GM12878 (cell line): ENCODE measurements at regions of chr17 and their contacts with region 1.

Region 1: DNA sequence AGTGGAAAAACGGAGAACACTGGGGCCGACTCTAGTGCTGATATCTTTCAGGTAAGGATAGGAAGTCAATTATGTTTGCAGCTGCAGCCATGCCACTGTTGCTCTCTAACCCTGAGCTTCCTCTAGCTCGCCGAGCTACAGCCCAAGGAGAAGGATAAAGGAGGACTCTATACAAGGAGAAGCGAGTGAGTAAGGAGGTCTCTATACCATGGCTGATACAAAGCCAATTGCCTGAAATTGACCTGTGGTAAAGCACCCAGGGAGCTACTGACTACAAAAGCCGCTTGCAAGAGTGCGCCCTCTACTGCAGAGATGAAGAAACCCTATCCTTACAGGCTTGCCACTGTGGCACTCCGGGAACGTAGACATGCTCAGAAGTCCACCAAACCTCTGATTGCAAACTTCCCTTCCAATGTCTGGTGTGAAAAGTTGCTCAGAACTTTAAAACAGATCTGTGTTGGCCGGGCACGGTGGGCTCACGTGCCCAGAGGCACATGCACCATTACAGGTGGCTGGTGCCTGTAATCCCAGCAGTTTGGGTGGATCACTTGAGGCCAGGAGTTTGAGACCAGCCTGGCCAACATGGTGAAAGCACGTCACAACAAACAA is 10.8 kb upstream of the SLC46A1 start:
- DNase-seq: no peak
- ATAC-seq: peak; percentile 100
- H3K4me3 ChIP-seq: no peak overlapping the region
- H3K27ac ChIP-seq: no peak overlapping the region
- H3K4me1 ChIP-seq: no peaks in the 10 kb centered on the region
- H3K27me3 ChIP-seq: no peaks in the 10 kb centered on the region
- CTCF ChIP-seq: peak; percentile 84 to 91 (median 91)
- EP300 ChIP-seq: no peak
- POLR2A ChIP-seq: no peak
- RAD21 ChIP-seq: peak; percentile 70

Region 2: DNA sequence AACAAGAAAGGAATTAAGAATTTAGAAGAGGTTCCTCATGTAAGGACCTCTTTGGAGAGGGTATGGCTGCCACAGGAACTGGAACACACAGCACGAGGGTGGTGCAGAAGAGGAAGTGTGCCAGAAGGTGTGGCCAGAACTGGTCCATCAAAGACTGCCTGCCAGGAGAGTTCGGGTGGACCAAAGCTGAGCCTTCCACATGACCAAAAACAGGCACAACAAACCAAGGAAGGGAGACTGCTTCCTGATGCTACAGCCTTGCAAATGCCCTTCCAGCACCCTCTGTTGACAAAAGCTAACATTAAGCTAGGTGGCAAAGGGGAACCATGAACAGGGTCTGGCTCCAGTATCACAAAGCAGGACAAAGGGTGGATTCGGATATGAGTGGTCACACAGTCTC is 223.6 kb before region 1 on chr17:
- CTCF ChIA-PET with region 1: no interaction called
- POLR2A ChIA-PET with region 1: no interaction called
- RAD21 ChIA-PET with region 1: no interaction called
- SMC1A ChIA-PET with region 1: no interaction called
- in situ Hi-C with region 1: no loop called
- intact Hi-C with region 1: no loop called
- DNase-seq: no peak
- ATAC-seq: peak; percentile 63
- H3K4me3 ChIP-seq: no peak overlapping the region
- H3K27ac ChIP-seq: no peak overlapping the region
- H3K4me1 ChIP-seq: no peaks in the 10 kb centered on the region
- H3K27me3 ChIP-seq: no peaks in the 10 kb centered on the region
- CTCF ChIP-seq: peak in 1 of 3 experiments; percentile 22; a peak in 2 of 6 replicates
- EP300 ChIP-seq: no peak
- POLR2A ChIP-seq: no peak
- RAD21 ChIP-seq: no peak

Region 3: DNA sequence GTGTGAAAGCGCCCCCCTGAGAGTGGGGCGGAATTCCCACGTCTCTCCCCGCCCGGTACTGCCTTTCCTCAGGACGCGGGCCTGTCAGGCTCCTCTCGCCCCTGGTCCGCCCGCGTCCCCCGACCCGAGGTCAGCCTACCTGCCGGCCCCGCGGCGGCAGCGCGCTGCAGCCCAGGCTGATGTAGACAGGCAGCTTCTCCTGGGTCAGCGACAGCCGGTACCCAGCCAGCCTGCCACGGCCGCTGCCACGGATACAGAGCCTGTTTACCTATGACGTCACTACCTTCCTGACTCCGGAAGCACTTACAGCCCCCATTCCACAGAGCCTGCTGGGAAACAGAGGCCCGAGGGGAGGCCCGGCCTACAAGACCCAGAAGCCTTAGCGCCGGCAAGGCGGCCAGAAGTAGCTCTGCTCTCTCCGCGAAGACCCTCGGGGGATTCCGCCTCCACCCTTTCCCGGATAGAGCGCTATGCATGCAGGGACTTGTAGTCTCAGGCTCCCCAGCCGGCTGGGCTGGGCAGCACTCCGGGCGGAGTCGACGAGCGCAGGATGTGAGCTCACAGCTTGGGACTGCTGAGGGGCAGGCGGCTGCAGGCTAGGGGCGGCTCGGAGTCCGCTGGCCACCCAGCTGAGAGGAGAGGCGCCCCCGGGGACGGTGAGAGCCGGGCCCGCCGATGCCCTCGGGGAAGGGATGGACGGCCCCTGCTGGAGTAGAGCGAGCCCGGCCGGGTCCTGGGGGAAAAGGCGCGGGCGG is 81.4 kb before region 1 on chr17 and contains the starts of genes IFT20 and TNFAIP1:
- CTCF ChIA-PET with region 1: interaction called, 15 read pairs
- POLR2A ChIA-PET with region 1: interaction called, 4 read pairs
- RAD21 ChIA-PET with region 1: interaction called, 9 read pairs
- SMC1A ChIA-PET with region 1: interaction called, 7 read pairs
- in situ Hi-C with region 1: no loop called
- intact Hi-C with region 1: no loop called
- DNase-seq: peak; percentile 98
- ATAC-seq: peak; percentile 98
- H3K4me3 ChIP-seq: peak within 1 kb of the TSS; percentile 88
- H3K27ac ChIP-seq: peak within 1 kb of the TSS; percentile 36
- H3K4me1 ChIP-seq: peaks cover 3% of the 10 kb centered on the region
- H3K27me3 ChIP-seq: no peaks in the 10 kb centered on the region
- CTCF ChIP-seq: no peak
- EP300 ChIP-seq: 0 out of 4 replicates have a peak, but pooled peaks of 1 of the 2 experiments have one; percentile 34
- POLR2A ChIP-seq: peak; percentile 93
- RAD21 ChIP-seq: no peak
- polyA plus RNA-seq, gene IFT20: 9.4 to 13.1 TPM
- polyA plus RNA-seq, gene TNFAIP1: 1.8 to 3.9 TPM

Region 4: DNA sequence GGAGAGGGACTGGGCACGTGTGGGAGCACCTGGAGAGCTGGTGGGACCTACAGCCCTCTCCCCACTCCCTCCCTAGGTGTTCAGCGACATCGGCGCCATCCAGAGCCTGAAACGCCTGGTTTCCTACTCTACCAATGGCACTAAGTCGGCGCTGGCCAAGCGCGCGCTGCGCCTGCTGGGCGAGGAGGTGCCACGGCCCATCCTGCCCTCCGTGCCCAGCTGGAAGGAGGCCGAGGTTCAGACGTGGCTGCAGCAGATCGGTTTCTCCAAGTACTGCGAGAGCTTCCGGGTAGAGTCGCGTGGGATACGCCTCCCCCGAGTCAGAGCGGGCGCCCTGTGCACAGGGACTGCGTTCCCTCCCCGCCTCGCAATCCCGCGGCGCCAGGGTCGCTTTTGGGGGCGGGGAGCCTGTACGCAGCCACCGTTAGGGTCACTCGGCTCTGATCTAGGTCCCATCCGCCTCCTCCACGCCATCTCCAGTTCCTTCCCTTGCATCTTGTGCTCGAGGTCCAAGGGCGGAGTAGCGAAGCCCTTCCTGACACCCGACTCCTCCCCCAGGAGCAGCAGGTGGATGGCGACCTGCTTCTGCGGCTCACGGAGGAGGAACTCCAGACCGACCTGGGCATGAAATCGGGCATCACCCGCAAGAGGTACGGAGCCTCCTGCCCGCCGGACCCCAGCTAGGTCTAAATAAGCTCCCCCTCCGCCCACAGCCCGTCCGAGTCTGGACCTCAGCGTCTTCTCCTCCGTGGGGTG is 32.3 kb before region 1 on chr17:
- CTCF ChIA-PET with region 1: interaction called, 14 read pairs
- POLR2A ChIA-PET with region 1: no interaction called
- RAD21 ChIA-PET with region 1: no interaction called
- SMC1A ChIA-PET with region 1: no interaction called
- in situ Hi-C with region 1: no loop called
- intact Hi-C with region 1: no loop called
- DNase-seq: no peak
- ATAC-seq: peak; percentile 90
- H3K4me3 ChIP-seq: peak overlapping the region; percentile 65
- H3K27ac ChIP-seq: 0 out of 2 replicates have a peak overlapping the region, but pooled peaks have one; percentile 1
- H3K4me1 ChIP-seq: no peaks in the 10 kb centered on the region
- H3K27me3 ChIP-seq: no peaks in the 10 kb centered on the region; a peak in 2 of 4 replicates
- CTCF ChIP-seq: no peak
- EP300 ChIP-seq: no peak
- POLR2A ChIP-seq: peak; percentile 91
- RAD21 ChIP-seq: no peak

Region 5: DNA sequence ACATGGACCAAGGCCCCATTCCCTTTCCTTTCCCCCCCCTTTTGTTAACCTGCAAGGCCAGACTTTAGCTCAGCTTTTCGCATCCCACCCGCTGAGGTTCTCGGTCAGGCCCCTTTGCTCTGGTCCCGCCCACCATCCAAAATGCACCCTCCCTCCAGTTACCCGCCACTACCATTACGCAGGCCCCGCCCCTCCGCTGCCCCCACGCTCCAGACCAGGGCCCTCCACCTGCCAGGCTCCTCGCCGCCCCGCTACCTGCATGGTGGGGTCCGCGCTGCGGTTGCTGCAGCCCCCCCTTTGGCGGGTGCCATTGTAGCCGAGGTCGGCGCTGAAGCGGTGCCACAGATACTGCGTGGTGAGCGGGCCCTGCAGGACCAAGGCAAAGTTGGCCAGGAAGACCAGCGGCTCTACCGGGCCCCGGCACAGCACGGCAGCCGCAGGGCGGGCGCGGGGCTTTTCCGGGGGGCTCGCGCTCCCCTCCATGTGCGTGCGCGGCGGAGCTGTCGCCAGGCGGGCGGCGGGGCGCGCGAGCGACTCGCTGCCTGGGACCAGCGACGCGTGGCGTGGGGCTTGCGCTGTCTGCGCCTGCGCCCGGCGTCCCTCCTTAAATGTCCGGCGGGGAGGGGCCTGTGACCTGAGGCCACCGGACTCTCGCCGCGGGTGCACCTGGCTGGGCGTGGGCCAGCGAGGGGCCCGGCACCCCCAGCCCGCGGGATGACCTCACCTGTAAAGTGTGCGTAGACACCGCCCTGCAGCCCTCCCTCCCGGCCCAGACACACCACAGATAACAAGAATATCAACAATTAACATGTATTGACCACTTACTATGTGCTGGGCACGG is 11.0 kb before region 1 on chr17 and contains the start of gene SLC46A1:
- CTCF ChIA-PET with region 1: interaction called, 37 read pairs
- POLR2A ChIA-PET with region 1: no interaction called
- RAD21 ChIA-PET with region 1: no interaction called
- SMC1A ChIA-PET with region 1: interaction called, 3 read pairs
- in situ Hi-C with region 1: no loop called
- intact Hi-C with region 1: no loop called
- DNase-seq: no peak
- ATAC-seq: peak; percentile 95
- H3K4me3 ChIP-seq: peak within 1 kb of the TSS; percentile 75
- H3K27ac ChIP-seq: peak within 1 kb of the TSS; percentile 37; the same call in 1 of the 2 replicates
- H3K4me1 ChIP-seq: peaks cover 3% of the 10 kb centered on the region
- H3K27me3 ChIP-seq: no peaks in the 10 kb centered on the region
- CTCF ChIP-seq: no peak
- EP300 ChIP-seq: no peak
- POLR2A ChIP-seq: peak; percentile 69
- RAD21 ChIP-seq: no peak
- polyA plus RNA-seq, gene SLC46A1: 3.4 to 6.0 TPM

Region 6: GRCh38 chr17:29687596-29687995 is 1270.8 kb after region 1 on chr17:
- CTCF ChIA-PET with region 1: no interaction called
- POLR2A ChIA-PET with region 1: no interaction called
- RAD21 ChIA-PET with region 1: no interaction called
- SMC1A ChIA-PET with region 1: no interaction called
- in situ Hi-C with region 1: no loop called
- intact Hi-C with region 1: no loop called
- DNase-seq: no peak
- ATAC-seq: no peak
- H3K4me3 ChIP-seq: no peak overlapping the region
- H3K27ac ChIP-seq: no peak overlapping the region
- H3K4me1 ChIP-seq: 0 out of 2 replicates have a peak, but pooled peaks cover 2% of the 10 kb centered on the region
- H3K27me3 ChIP-seq: no peaks in the 10 kb centered on the region
- CTCF ChIP-seq: no peak
- EP300 ChIP-seq: no peak
- POLR2A ChIP-seq: no peak
- RAD21 ChIP-seq: no peak